ENCODE measurements at regions of chr5 and their contacts with region 1.

Region 1: GRCh38 chr5:177357459-177358351 is at the start of gene RGS14:
- DNase-seq: peak; percentile 50 to 90 (median 87)
- ATAC-seq: peak; percentile 95
- H3K4me3 ChIP-seq: peak within 1 kb of the TSS; percentile 70
- H3K4me3 Mint-ChIP-seq: peak within 1 kb of the TSS; percentile 83 to 97 (median 92)
- H3K27ac ChIP-seq: peak within 1 kb of the TSS; percentile 87
- H3K27ac Mint-ChIP-seq: peak within 1 kb of the TSS; percentile 80 to 98 (median 94)
- H3K4me1 ChIP-seq: peaks cover 47 to 56% of the 10 kb centered on the region in 2 donors
- H3K4me1 Mint-ChIP-seq: peaks cover 64 to 86% (median 74%) of the 10 kb centered on the region in 7 donors
- H3K27me3 ChIP-seq: no peaks in the 10 kb centered on the region
- H3K27me3 Mint-ChIP-seq: no peaks in the 10 kb centered on the region
- total RNA-seq, gene RGS14: 68.4 to 196 (median 112) TPM

Region 2: DNA sequence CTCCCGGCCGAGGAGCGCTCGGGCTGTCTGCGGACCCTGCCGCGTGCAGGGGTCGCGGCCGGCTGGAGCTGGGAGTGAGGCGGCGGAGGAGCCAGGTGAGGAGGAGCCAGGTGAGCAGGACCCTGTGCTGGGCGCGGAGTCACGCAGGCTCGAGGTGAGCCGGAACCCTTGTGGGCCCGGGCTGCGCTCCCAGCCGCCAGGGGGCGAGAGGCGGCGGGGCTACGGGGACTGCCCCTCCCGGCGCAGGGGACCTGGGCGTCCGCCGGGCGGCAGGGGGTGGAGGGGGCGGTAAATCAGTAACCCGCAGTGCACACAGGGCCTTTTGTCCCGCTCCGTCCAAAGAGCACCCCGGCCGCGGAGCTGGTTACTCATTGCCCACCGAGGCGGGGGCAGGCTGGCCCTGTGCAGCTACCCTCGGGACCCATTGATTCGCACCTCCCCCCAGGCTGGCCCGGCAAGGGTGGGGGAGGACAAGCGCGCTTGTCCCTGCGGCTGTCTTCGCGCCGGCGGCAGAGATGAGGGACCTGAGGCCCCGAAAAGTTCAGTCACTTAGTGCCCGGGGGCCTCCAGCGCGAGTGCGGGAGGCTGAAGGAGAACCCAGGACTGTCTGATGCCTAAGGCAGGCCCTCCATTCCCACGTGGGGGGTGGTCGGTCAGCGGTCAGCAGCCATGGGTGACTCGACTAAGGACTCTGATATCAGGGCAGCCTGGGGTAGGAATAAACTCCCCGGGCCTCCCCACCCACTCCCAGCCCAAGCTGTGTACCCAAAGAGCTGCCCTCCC is 270.6 kb before region 1 on chr5:
- CTCF ChIA-PET with region 1: no interaction called
- POLR2A ChIA-PET with region 1: no interaction called
- intact Hi-C with region 1: no loop called
- DNase-seq: peak; percentile 60 to 79 (median 71)
- ATAC-seq: peak; percentile 86
- H3K4me3 ChIP-seq: peak overlapping the region; percentile 30
- H3K4me3 Mint-ChIP-seq: peak overlapping the region in 8 of 10 donors; percentile 5 to 80 (median 35)
- H3K27ac ChIP-seq: no peak overlapping the region
- H3K27ac Mint-ChIP-seq: no peak overlapping the region
- H3K4me1 ChIP-seq: peaks cover 4 to 6% of the 10 kb centered on the region in 2 donors
- H3K4me1 Mint-ChIP-seq: peaks cover 10 to 18% (median 11%) of the 10 kb centered on the region in 7 donors
- H3K27me3 ChIP-seq: no peaks in the 10 kb centered on the region
- H3K27me3 Mint-ChIP-seq: peaks cover 0 to 44% (median 8%) of the 10 kb centered on the region in 5 donors

Region 3: DNA sequence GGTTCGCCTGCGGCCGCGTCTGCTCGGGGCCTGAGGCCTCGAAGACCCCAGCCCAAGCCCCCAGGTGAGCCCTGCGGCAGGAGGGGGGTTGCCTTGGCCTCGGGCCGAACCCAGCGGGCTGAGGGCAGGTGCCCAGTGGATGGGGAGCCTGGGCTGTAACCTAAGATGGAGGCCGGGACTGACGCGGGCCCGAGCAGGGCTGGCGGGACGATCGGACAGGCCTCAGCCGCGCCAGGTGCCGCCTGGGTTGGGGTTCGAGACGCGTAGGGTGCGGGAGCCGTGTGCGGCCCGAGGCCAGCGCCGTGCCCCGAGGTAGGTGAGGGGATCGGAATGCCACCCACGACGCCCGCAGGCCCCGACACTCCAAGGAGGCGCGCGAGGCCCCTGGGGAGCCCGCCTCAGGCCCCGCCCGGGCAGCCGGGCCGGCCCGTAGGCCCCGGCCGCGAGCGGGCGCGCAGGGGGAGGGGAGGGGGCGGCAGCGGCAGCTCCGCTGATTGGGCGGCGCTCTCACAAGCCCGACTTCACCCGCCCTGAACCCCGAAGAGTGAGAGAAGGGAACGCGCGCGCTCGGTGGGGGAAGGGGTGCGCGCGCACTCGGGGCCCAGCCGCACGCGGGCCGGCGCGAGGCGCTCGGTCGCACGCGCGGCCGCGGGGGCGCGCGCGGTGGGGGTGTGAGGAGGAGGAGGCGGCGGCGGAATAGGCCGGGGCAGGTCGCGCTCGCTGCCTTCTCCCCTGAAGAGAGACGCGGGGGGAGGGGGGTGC is 224.4 kb before region 1 on chr5 and contains the start of gene NSD1:
- CTCF ChIA-PET with region 1: no interaction called
- POLR2A ChIA-PET with region 1: no interaction called
- intact Hi-C with region 1: loop called (anchors 1 to 5 kb)
- DNase-seq: peak; percentile 86 to 94 (median 93)
- ATAC-seq: peak; percentile 89
- H3K4me3 ChIP-seq: peak within 1 kb of the TSS; percentile 61
- H3K4me3 Mint-ChIP-seq: peak within 1 kb of the TSS; percentile 60 to 88 (median 85)
- H3K27ac ChIP-seq: peak within 1 kb of the TSS; percentile 80
- H3K27ac Mint-ChIP-seq: peak within 1 kb of the TSS; percentile 48 to 95 (median 89)
- H3K4me1 ChIP-seq: peaks cover 47 to 57% of the 10 kb centered on the region in 2 donors
- H3K4me1 Mint-ChIP-seq: peaks cover 34 to 72% (median 65%) of the 10 kb centered on the region in 7 donors
- H3K27me3 ChIP-seq: no peaks in the 10 kb centered on the region
- H3K27me3 Mint-ChIP-seq: no peaks in the 10 kb centered on the region
- total RNA-seq, gene NSD1: 105 to 126 (median 117) TPM

Region 4: GRCh38 chr5:177382423-177383029 is 24.8 kb after region 1 on chr5:
- CTCF ChIA-PET with region 1: interaction called, 10 read pairs
- POLR2A ChIA-PET with region 1: interaction called, 15 read pairs
- intact Hi-C with region 1: loop called in 1 of 2 experiments (anchors 2 kb)
- DNase-seq: peak in 7 of 9 donors; percentile 48 to 72 (median 60)
- ATAC-seq: peak; percentile 66
- H3K4me3 ChIP-seq: no peak overlapping the region
- H3K4me3 Mint-ChIP-seq: peak overlapping the region in 8 of 10 donors; percentile 5 to 76 (median 42)
- H3K27ac ChIP-seq: no peak overlapping the region
- H3K27ac Mint-ChIP-seq: peak overlapping the region in 7 of 9 donors; percentile 23 to 86 (median 66)
- H3K4me1 ChIP-seq: peaks cover 6 to 14% of the 10 kb centered on the region in 2 donors
- H3K4me1 Mint-ChIP-seq: peaks cover 24 to 54% (median 37%) of the 10 kb centered on the region in 7 donors
- H3K27me3 ChIP-seq: no peaks in the 10 kb centered on the region
- H3K27me3 Mint-ChIP-seq: peaks cover 0 to 4% (median 0%) of the 10 kb centered on the region in 5 donors

Region 5: DNA sequence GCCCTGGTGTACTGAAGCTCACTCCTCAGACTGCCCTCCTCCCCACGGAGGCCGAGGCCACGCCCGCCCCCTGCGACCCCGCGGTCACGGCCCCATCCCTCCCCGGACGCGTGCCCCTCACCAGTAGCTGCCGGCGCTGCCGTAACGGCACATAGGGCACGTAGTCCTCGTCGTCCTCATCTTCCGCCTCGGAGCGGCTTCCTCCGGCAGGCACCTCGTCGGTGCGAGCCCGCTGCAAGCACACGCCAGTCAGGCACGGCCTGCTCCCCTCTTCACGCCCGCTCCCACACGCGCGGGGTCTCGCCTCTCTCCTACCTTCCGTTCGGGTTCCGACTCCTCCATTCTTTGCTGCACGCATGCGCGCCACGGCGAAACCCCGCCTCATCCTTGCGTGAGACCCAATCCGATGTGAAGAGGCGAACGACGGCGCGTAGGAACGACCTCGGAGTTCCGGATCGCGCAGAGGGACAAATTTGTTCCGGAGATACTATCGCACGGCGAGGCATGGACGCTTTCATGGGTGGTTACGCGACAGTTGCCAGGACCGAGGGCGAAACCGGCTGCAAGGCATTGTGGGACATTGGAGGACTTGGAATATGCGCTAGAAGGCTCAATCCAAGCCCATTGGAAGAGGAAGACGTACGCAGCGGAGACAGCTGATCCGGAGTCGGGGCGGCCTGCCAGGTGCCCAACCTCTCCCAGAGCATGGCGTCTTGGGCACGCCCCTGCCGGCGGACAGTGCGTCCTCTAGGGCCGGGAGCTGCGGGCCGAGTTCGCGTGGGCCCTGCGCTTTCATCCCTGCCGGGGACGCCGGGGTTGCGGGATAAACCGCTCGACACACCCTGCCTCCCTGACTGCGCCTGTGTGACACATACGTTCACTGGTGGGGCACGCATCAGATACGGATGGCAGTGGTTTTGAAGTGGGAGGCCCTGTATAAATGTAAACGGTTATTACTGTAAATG is 159.2 kb after region 1 on chr5 and contains the start of gene DDX41:
- CTCF ChIA-PET with region 1: no interaction called
- POLR2A ChIA-PET with region 1: no interaction called
- intact Hi-C with region 1: loop called in 1 of 2 experiments (anchors 2 kb)
- DNase-seq: peak; percentile 88 to 96 (median 95)
- ATAC-seq: peak; percentile 92
- H3K4me3 ChIP-seq: peak within 1 kb of the TSS; percentile 76
- H3K4me3 Mint-ChIP-seq: peak within 1 kb of the TSS; percentile 92 to 99 (median 96)
- H3K27ac ChIP-seq: peak within 1 kb of the TSS; percentile 79
- H3K27ac Mint-ChIP-seq: peak within 1 kb of the TSS; percentile 85 to 97 (median 92)
- H3K4me1 ChIP-seq: peaks cover 15 to 17% of the 10 kb centered on the region in 2 donors
- H3K4me1 Mint-ChIP-seq: peaks cover 42 to 58% (median 52%) of the 10 kb centered on the region in 7 donors
- H3K27me3 ChIP-seq: no peaks in the 10 kb centered on the region
- H3K27me3 Mint-ChIP-seq: peaks cover 0 to 2% (median 0%) of the 10 kb centered on the region in 5 donors
- total RNA-seq, gene DDX41: 65.8 to 126 (median 76.1) TPM

Region 6: DNA sequence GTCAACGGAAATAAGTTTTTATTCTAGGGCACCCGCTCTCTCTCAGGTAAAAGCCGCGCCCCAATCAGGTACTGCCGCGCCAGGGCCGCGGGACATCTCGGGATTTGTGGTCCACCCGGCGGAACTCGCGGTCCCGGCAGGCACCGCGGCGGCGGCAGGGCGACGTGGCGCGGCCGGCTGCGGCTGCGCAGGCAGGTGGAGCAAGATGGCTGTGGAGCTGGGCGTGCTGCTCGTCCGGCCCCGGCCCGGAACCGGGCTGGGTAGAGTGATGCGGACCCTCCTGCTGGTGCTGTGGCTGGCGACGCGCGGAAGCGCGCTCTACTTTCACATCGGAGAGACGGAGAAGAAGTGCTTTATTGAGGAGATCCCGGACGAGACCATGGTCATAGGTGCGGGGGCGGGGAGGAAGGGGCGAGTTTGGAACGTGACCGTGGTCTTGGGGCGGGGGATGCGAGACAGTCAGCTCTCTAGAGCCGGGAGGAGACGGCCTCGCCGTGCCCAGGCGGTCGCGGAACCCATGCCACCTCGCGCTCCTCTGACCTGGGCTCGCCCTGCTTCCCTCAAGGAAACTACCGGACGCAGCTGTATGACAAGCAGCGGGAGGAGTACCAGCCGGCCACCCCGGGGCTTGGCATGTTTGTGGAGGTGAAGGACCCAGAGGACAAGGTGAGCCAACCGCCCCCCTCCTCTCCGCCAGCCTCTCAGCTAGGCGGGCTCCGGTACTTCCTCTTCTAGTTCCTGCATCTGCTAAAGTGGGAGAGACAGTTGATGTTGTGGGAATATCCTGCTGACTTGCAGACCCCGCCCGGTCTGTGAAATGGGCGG is 234.5 kb after region 1 on chr5 and contains the start of gene TMED9:
- CTCF ChIA-PET with region 1: no interaction called
- POLR2A ChIA-PET with region 1: no interaction called
- intact Hi-C with region 1: loop called in 1 of 2 experiments (anchors 5 kb)
- DNase-seq: peak; percentile 83 to 92 (median 90)
- ATAC-seq: peak; percentile 99
- H3K4me3 ChIP-seq: peak within 1 kb of the TSS; percentile 95
- H3K4me3 Mint-ChIP-seq: peak within 1 kb of the TSS; percentile 81 to 100 (median 96)
- H3K27ac ChIP-seq: peak within 1 kb of the TSS; percentile 71
- H3K27ac Mint-ChIP-seq: peak within 1 kb of the TSS; percentile 83 to 99 (median 95)
- H3K4me1 ChIP-seq: peaks cover 16% of the 10 kb centered on the region in 2 donors
- H3K4me1 Mint-ChIP-seq: peaks cover 18 to 35% (median 22%) of the 10 kb centered on the region in 7 donors
- H3K27me3 ChIP-seq: no peaks in the 10 kb centered on the region
- H3K27me3 Mint-ChIP-seq: peaks cover 8 to 29% (median 12%) of the 10 kb centered on the region in 5 donors
- total RNA-seq, gene TMED9: 50.5 to 144 (median 67.5) TPM